Transverse colon (tissue), 4 donors: ENCODE measurements at regions of chr7 and their contacts with region 1.

Region 1: DNA sequence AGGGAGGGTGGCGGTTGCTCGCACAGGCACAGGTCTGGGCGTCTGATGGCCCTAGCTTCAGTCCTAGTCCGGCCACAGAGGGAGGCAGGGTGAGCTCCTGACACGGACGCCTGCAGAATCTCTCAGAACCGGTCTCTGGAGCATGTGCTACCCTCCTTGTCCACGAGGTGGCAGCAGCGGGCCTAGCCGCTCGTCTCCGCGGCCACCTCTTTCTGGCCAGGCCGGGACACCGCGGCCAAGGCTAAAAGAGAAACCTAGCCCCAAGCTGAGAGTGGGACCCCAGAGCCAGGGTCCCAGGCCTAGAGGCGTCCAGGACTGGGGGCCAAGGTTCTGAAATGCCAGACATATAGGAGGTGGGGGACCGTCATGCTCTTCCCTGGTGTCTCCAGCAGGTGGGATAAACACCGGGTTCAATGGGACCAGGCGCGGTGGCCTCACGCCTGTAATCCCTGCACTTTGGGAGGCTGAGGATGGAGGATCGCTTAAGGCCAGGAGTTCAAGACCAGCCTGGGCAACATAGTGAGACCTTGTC is 3.2 kb upstream of the LAT2 start:
- DNase-seq: peak; percentile 92
- H3K4me3 ChIP-seq: peak overlapping the region in 2 of 4 donors; percentile 17 to 47
- H3K27ac ChIP-seq: no peak overlapping the region
- H3K4me1 ChIP-seq: peaks cover 4 to 34% (median 13%) of the 10 kb centered on the region in 4 donors
- H3K27me3 ChIP-seq: peaks cover 8% of the 10 kb centered on the region
- CTCF ChIP-seq: peak; percentile 97 to 99 (median 98)
- EP300 ChIP-seq: no peak
- POLR2A ChIP-seq: no peak

Region 2: DNA sequence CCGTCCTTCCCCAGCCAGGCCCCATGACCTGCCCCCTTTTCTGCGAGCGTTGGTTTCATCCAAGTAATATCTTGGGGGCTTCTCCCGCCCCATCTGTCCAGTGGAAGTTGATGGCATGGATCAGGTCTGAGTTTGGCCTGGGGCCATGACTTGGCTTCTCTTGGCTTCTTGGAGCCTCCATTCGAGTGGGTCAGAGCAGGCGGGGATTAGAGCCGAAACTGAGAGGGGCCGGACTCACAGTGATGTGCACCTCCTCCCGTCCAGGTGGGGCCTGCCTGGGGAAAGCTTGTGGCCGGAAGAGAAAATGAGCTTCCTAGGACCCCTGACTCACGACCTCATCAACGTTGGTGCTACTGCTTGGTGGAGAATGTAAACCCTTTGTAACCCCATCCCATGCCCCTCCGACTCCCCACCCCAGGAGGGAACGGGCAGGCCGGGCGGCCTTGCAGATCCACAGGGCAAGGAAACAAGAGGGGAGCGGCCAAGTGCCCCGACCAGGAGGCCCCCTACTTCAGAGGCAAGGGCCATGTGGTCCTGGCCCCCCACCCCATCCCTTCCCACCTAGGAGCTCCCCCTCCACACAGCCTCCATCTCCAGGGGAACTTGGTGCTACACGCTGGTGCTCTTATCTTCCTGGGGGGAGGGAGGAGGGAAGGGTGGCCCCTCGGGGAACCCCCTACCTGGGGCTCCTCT is 138.1 kb before region 1 on chr7:
- in situ Hi-C with region 1: loop called in 1 of 4 experiments (anchors 5 kb)
- intact Hi-C with region 1: no loop called
- DNase-seq: no peak
- H3K4me3 ChIP-seq: no peak overlapping the region
- H3K27ac ChIP-seq: peak overlapping the region in 1 of 4 donors; percentile 21
- H3K4me1 ChIP-seq: no peaks in the 10 kb centered on the region
- H3K27me3 ChIP-seq: no peaks in the 10 kb centered on the region
- CTCF ChIP-seq: no peak
- EP300 ChIP-seq: no peak
- POLR2A ChIP-seq: no peak

Region 3: DNA sequence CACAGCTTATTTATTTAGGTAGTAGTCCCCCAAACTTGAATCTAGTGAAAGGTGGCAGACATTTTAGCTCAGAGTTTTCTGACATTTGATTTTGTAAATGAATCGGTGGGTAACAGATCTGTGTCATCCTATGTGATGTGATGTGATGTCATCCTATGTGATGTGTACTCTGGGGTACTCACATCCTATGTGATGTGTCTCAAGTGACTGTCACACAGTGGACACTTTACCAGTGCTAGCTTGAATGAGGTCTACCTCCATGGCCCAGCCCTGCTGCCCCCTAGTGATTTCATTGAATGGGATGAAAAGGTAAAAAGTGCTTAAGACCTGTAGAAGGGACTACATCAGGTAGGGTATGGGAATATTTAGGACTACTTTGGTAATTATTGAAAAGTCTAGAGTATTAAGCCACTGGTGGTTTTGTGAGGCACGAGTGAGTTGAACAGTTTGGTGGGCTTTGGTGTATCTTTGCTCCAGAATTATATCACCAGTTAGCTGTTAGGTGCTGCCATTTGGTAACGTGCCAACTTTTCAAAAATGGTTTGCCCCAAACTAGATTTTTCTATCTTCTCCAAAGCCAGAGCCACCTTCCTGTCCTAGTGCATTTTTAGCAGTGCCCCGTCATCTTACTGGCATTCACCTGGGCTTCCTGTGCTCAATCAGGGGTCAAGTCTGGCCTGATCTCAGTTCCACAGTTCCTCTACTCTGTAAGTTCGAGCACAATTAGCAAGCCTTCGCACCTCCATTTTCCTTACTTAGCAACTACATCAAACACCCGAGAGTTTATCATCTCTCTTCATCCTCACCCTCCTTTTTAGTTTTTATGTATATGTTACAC is 22.8 kb before region 1 on chr7:
- in situ Hi-C with region 1: no loop called
- intact Hi-C with region 1: no loop called
- DNase-seq: no peak
- H3K4me3 ChIP-seq: no peak overlapping the region
- H3K27ac ChIP-seq: peak overlapping the region in 3 of 4 donors; percentile 19 to 63 (median 59)
- H3K4me1 ChIP-seq: peaks cover 50 to 95% (median 71%) of the 10 kb centered on the region in 4 donors
- H3K27me3 ChIP-seq: no peaks in the 10 kb centered on the region
- CTCF ChIP-seq: peak in 2 of 5 experiments; percentile 15 to 20
- EP300 ChIP-seq: no peak
- POLR2A ChIP-seq: no peak